Activated CD8-positive, alpha-beta T cell treated with anti-CD3 and anti-CD28 coated beads for 36 hours (primary cell): ENCODE measurements at regions of chr15 and their contacts with region 1.

Region 1: GRCh38 chr15:71386448-71387236 is 271.4 kb downstream of the THSD4 start:
- DNase-seq: no peak
- ATAC-seq: no peak
- H3K4me3 Mint-ChIP-seq: no peak overlapping the region
- H3K27ac Mint-ChIP-seq: no peak overlapping the region
- H3K4me1 Mint-ChIP-seq: peaks cover 2% of the 10 kb centered on the region
- H3K27me3 Mint-ChIP-seq: peaks cover 21% of the 10 kb centered on the region
- CTCF ChIP-seq: peak; percentile 63

Region 2: DNA sequence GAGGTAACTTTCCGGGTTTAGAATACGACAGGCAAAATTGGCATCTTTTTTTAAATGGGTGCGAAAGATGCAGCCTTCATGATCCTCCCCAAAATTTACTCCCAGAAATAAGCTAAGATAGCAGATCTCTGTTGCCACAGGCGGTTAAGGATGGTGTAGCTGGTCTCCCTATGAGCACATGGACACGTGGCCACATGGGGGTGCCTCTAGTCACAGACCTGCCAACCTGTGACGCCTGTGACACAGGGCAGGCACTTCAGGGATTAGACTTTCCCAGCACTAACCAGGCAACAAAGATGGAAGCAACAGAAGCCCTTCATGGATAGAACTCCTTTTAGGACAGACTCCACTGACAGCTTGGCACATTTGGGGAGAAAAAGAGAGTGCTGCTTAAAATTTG is 48.9 kb after region 1 on chr15:
- CTCF ChIA-PET with region 1: interaction called, 14 read pairs
- POLR2A ChIA-PET with region 1: no interaction called
- intact Hi-C with region 1: loop called (anchors 5 kb)
- DNase-seq: no peak
- ATAC-seq: no peak
- H3K4me3 Mint-ChIP-seq: no peak overlapping the region
- H3K27ac Mint-ChIP-seq: no peak overlapping the region
- H3K4me1 Mint-ChIP-seq: no peaks in the 10 kb centered on the region
- H3K27me3 Mint-ChIP-seq: peaks cover 5% of the 10 kb centered on the region
- CTCF ChIP-seq: no peak